ENCODE measurements at regions of chr2 and their contacts with region 1.

Region 1: GRCh38 chr2:196233021-196233804 is 61.8 kb upstream of the STK17B start:
- DNase-seq: no peak
- ATAC-seq: peak in 3 of 4 experiments; percentile 1 to 27 (median 18)
- H3K4me3 ChIP-seq: no peak overlapping the region
- H3K4me3 Mint-ChIP-seq: peak overlapping the region in 1 of 3 donors; percentile 49
- H3K27ac ChIP-seq: peak overlapping the region; percentile 69
- H3K27ac Mint-ChIP-seq: peak overlapping the region; percentile 91 to 97
- H3K4me1 ChIP-seq: peaks cover 60 to 61% of the 10 kb centered on the region in 2 experiments
- H3K4me1 Mint-ChIP-seq: peaks cover 92 to 93% (median 92%) of the 10 kb centered on the region in 3 donors
- H3K27me3 ChIP-seq: no peaks in the 10 kb centered on the region
- H3K27me3 Mint-ChIP-seq: no peaks in the 10 kb centered on the region

Region 2: GRCh38 chr2:195930082-195930481 is 303.1 kb before region 1 on chr2:
- CTCF ChIA-PET with region 1: no interaction called
- POLR2A ChIA-PET with region 1: no interaction called
- DNase-seq: no peak
- ATAC-seq: no peak
- H3K4me3 ChIP-seq: no peak overlapping the region
- H3K4me3 Mint-ChIP-seq: no peak overlapping the region
- H3K27ac ChIP-seq: no peak overlapping the region
- H3K27ac Mint-ChIP-seq: no peak overlapping the region
- H3K4me1 ChIP-seq: no peaks in the 10 kb centered on the region
- H3K4me1 Mint-ChIP-seq: no peaks in the 10 kb centered on the region
- H3K27me3 ChIP-seq: no peaks in the 10 kb centered on the region
- H3K27me3 Mint-ChIP-seq: no peaks in the 10 kb centered on the region

Region 3: DNA sequence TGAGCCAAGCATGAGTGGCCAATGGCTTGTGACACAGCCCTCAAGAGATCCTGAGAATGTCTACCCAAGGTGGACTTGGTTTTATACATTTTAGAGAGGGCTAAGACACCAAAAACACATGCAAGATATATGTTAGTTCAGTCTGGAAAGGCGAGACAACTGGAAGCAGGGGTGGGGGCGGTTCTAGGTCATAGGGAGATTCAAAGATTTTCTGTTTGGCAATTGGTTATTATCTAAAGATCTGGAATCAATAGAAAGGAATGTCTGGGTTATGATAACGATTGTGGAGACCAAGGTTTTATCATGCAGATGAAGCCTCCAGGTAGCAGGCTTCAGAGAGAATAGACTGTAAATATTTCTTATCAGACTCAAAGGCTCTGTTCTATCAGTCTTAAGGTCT is 49.2 kb after region 1 on chr2:
- CTCF ChIA-PET with region 1: interaction called, 7 to 24 read pairs
- POLR2A ChIA-PET with region 1: interaction called, 4 to 13 read pairs
- DNase-seq: no peak
- ATAC-seq: no peak
- H3K4me3 ChIP-seq: no peak overlapping the region
- H3K4me3 Mint-ChIP-seq: no peak overlapping the region
- H3K27ac ChIP-seq: no peak overlapping the region
- H3K27ac Mint-ChIP-seq: peak overlapping the region in 1 of 2 donors; percentile 61
- H3K4me1 ChIP-seq: no peaks in the 10 kb centered on the region
- H3K4me1 Mint-ChIP-seq: peaks cover 19 to 41% (median 27%) of the 10 kb centered on the region in 3 donors
- H3K27me3 ChIP-seq: no peaks in the 10 kb centered on the region
- H3K27me3 Mint-ChIP-seq: no peaks in the 10 kb centered on the region